Aorta (tissue), 5 donors: ENCODE measurements at regions of chr6 and their contacts with region 1.

Region 1: GRCh38 chr6:107489636-107490565 is at the start of gene SOBP:
- DNase-seq: peak; percentile 75 to 91
- ATAC-seq: peak; percentile 63
- H3K4me3 ChIP-seq: peak within 1 kb of the TSS; percentile 58 to 80
- H3K27ac ChIP-seq: peak within 1 kb of the TSS; percentile 51 to 70
- H3K4me1 ChIP-seq: peaks cover 1 to 5% of the 10 kb centered on the region in 2 donors
- H3K27me3 ChIP-seq: no peaks in the 10 kb centered on the region
- total RNA-seq, gene SOBP: 18.6 to 20.2 TPM

Region 2: GRCh38 chr6:107459283-107460082 is 30.4 kb before region 1 on chr6 and contains the start of gene PDSS2:
- intact Hi-C with region 1: loop called in 1 of 2 experiments (anchors 2 kb)
- DNase-seq: peak; percentile 99 to 100
- ATAC-seq: peak; percentile 100
- H3K4me3 ChIP-seq: peak within 1 kb of the TSS; percentile 63 to 81
- H3K27ac ChIP-seq: peak within 1 kb of the TSS in 1 of 2 donors; percentile 65
- H3K4me1 ChIP-seq: no peaks in the 10 kb centered on the region
- H3K27me3 ChIP-seq: no peaks in the 10 kb centered on the region
- total RNA-seq, gene PDSS2: 9.9 to 12.9 TPM

Region 3: DNA sequence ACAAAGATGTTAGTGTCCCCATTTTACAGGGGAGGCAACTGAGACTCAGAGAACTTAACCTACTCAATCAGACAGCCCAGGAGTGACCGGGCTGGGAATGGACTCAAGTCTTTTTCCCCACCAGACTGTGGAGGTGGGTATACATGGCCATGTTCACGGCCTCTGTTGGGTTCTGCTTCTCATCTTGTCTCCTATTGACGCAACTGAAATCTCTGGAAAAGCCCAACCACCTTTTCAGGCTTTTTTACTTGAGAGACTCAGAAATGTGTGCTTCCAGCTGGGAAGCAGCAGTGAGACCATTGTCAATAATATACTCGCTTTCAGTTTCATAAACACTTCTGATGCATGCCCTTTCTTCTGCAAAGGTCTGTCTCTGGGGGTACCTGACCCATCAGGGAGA is 70.8 kb after region 1 on chr6:
- intact Hi-C with region 1: loop called (anchors 5 kb)
- DNase-seq: no peak
- ATAC-seq: peak; percentile 47
- H3K4me3 ChIP-seq: no peak overlapping the region
- H3K27ac ChIP-seq: peak overlapping the region; percentile 49 to 86
- H3K4me1 ChIP-seq: peaks cover 0 to 10% of the 10 kb centered on the region in 2 donors
- H3K27me3 ChIP-seq: no peaks in the 10 kb centered on the region

Region 4: DNA sequence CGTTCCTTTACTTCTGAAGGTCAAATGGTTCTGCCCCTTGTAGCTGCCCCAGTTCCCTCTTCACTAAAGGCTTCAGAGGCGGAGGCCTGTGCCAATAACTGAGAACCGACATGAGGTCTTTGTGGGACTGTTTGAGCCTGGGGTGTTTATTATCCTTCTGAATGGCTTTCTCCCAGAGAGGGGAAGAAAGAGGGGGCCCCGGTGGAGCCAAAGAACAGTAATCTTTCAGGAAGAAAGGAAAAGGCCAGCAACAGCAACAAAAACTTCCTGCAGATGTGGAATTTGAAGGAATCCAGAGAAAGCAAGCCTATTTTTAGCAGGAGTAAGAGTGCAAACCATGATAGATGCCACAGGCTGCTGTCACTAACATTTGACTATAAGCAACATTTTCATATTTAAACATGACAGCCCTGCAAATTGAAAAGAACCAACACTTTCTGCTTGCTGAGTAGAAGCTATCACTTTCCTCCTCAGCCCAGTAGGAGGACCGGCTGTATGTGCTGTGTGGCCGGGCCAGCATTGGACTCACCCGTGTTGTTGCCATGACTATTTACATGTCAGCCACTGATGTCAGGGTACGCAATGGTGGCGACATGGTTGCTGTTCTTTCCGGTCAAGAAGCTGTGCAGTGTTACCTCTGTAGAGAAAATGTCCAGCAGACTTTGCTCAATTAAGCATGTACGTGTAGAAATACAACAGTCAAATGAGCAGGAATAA is 121.4 kb after region 1 on chr6:
- intact Hi-C with region 1: loop called in 1 of 2 experiments (anchors 5 kb)
- DNase-seq: no peak
- ATAC-seq: no peak
- H3K4me3 ChIP-seq: no peak overlapping the region
- H3K27ac ChIP-seq: no peak overlapping the region
- H3K4me1 ChIP-seq: peaks cover 3 to 8% of the 10 kb centered on the region in 2 donors
- H3K27me3 ChIP-seq: no peaks in the 10 kb centered on the region

Region 5: GRCh38 chr6:107633680-107634323 is 143.9 kb after region 1 on chr6:
- intact Hi-C with region 1: loop called in 1 of 2 experiments (anchors 2 kb)
- DNase-seq: no peak
- ATAC-seq: peak; percentile 36
- H3K4me3 ChIP-seq: no peak overlapping the region
- H3K27ac ChIP-seq: no peak overlapping the region
- H3K4me1 ChIP-seq: peaks cover 0 to 4% of the 10 kb centered on the region in 2 donors
- H3K27me3 ChIP-seq: no peaks in the 10 kb centered on the region